PC-9 (cell line): ENCODE measurements at regions of chr18 and their contacts with region 1.

Region 1: DNA sequence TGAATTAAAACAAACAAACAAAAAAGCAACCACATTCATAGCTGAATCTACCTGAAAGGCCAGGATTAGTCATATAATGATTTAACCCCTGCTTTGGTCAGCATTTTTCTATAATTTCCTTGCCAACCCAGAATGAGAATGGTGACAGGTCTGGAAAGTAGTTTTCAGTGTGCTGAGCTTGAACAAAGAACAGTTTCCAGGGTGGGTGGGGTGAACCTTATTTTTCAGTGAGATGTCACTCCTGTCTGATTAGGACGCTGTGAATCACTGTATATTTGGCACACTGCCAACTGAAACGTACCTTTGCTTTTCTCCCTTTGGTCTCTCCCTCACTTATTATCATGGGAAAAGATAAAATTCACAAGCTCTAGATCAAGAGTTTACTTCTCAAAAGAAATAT is 35.0 kb upstream of the DSC1 start:
- DNase-seq: peak in 1 of 2 experiments; percentile 50
- H3K4me3 ChIP-seq: no peak overlapping the region
- H3K27ac ChIP-seq: no peak overlapping the region
- H3K4me1 ChIP-seq: peaks cover 29% of the 10 kb centered on the region
- H3K27me3 ChIP-seq: no peaks in the 10 kb centered on the region
- CTCF ChIP-seq: no peak

Region 2: DNA sequence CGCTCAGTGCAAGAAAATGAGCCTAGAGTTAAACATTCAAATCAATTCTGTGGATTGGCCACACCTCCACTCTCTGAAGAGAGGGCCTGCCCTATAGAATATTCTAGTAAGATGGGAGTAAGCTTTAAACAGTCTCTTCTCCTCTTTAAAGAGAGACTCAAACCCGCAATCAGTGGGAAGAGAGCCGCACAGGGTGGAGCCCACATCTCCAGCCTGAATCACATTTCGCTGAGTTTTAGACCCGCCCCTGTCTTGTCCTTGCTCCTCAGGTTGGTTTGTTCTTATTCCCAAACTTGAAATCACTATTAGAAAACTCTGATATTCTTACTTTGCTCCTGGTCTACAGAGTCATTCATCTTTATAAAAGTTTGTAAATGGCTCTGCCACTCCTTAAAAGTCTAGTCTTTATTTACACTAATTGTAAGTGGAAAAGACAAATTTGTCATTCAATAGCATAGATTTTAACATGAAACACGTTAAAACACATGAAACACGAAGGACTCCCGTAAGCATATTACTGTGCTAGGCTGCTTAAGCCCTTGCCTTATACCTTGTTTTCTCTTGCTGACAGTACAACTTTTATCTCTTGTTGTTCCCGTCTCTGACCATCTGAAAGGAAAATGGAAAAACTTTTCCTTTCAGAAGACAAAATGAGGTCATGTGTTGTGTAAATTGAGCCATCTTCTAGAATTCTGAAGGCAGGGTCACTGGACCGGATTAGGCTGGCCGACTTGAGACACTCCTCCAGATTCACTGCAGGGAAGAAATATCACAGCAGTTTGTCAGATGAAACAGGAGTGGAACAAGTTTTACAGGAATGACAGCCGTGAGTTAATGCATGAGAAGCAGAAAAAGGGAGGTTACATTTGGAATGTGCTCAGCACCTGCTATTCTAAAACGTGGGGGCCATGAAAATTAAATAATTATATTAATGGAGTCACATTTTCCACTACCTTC is 40.6 kb before region 1 on chr18:
- CTCF ChIA-PET with region 1: no interaction called
- POLR2A ChIA-PET with region 1: no interaction called
- intact Hi-C with region 1: loop called (anchors 2 kb)
- DNase-seq: peak; percentile 51 to 86
- H3K4me3 ChIP-seq: 0 out of 2 replicates have a peak overlapping the region, but pooled peaks have one; percentile 28
- H3K27ac ChIP-seq: peak overlapping the region; percentile 35
- H3K4me1 ChIP-seq: peaks cover 10% of the 10 kb centered on the region; the same call in 1 of the 2 replicates
- H3K27me3 ChIP-seq: no peaks in the 10 kb centered on the region
- CTCF ChIP-seq: no peak

Region 3: DNA sequence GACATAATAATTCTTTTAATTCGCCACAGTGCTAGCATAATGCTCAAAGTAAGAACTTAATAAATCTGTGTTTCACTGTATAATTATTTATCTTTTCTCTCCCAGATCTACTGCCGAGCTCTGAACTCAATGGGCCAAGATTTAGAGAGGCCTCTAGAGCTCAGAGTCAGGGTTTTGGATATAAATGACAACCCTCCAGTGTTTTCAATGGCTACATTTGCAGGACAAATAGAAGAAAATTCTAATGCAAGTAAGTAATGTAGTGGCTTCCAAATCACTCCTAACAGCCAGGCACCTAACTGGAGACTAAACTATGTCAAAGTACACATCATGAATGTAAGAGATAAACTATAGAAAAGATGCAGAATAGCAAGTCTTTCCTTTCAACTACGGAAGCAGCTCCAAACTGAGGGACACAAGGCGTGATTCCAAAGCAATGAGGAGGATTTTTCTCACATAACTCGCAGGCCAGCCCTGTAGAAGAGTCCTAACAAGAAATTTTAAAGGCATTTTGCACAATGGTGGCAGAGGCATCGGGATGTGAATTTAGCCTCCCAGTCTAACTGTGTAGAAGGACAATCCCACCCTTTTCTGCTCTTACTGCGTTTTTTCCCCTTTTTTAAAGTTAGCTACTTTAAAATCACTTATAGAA is 132.2 kb after region 1 on chr18:
- CTCF ChIA-PET with region 1: interaction called, 13 read pairs
- POLR2A ChIA-PET with region 1: no interaction called
- intact Hi-C with region 1: no loop called
- DNase-seq: no peak
- H3K4me3 ChIP-seq: no peak overlapping the region
- H3K27ac ChIP-seq: no peak overlapping the region
- H3K4me1 ChIP-seq: no peaks in the 10 kb centered on the region
- H3K27me3 ChIP-seq: no peaks in the 10 kb centered on the region
- CTCF ChIP-seq: no peak

Region 4: DNA sequence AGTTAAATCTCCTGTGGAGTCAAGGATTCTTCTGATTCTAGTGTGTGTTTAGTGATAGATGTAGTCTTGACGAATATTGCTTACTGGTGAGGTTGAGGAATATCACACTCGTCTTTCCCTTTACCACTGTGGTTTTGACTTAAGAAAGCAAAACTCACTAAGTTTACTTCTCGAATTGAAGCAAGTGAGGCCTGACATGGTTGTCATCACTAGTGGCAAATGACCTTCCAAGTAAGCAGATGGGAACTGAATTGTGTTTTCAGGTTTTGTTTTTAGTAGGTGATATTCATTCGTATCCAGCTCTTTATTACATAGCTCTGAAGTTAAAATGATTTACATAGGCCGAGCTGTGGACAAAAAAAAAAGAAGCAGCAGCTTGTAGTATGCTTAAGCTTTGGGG is 158.3 kb after region 1 on chr18:
- CTCF ChIA-PET with region 1: no interaction called
- POLR2A ChIA-PET with region 1: no interaction called
- intact Hi-C with region 1: no loop called
- DNase-seq: no peak
- H3K4me3 ChIP-seq: no peak overlapping the region
- H3K27ac ChIP-seq: no peak overlapping the region
- H3K4me1 ChIP-seq: no peaks in the 10 kb centered on the region
- H3K27me3 ChIP-seq: no peaks in the 10 kb centered on the region
- CTCF ChIP-seq: no peak